Right ventricle myocardium inferior (tissue), 1 donor: ENCODE measurements at regions of chr10 and their contacts with region 1.

Region 1: GRCh38 chr10:31864834-31865518 is 63.7 kb downstream of the ARHGAP12 start:
- DNase-seq: no peak
- ATAC-seq: no peak

Region 2: DNA sequence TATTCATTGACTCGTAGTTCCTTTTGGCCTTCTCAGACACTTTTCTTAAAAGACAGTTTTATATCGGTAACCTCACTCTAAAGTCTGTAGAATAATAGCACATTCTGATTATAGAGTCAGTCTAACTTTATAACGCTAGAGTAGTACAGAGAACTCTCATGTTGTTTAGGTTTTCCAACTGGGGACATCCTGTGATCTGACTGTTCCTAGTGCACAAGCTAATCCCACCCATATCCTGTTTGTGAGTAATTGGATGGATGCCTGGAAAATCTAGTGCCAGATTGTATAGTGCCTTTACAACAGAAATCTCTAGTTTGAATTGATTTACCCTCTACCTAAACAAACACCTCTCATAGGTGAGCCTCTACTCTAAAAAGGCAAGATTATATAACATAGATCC is 438.6 kb before region 1 on chr10:
- intact Hi-C with region 1: no loop called
- DNase-seq: no peak
- ATAC-seq: peak; percentile 61

Region 3: DNA sequence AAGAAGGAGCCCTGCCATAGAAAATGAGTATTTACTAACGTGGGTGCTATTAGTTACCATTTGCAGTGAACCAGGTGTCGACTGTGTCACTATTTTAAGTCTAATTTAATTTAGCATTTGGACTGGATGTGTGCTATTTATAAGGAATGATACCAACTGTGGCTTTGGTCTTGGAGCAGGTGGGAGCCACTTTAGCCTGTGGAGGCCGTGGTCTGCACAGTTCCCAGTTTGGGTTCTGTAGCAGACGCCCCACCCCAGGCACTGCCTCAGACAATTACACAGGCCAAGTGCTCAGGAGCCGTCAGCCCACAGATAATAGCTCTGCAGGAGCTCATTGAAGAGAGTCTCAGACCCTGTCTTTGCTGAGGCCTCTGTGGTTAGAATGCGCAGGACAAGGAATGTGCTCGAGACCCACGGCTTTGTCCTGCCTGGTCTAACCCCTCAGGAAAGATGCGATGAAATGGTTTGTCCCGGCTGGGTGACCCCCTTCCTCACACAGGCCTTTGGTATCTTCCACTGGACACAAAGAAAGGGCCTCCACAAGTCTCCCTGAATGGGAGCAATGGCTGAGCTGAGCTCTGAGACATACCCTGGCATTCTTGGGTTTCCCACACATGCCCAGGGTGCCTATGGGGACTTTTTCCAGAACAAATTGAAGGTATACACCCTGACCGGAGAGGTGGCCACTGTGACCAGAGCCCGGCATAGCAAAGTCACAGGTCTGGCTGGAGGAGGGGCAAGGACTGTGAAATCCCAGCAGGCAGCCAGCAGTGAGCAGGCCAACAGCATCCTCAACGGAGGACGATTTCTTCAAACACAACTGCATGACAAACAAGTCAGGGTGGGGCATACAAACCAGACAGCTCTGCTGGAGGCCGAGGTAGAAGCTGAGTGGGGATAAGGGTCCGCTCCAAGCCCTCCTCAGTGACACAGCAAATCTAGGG is 187.5 kb before region 1 on chr10:
- intact Hi-C with region 1: no loop called
- DNase-seq: no peak
- ATAC-seq: peak; percentile 26

Region 4: GRCh38 chr10:31928549-31929260 is 63.7 kb after region 1 on chr10 and contains the start of gene ARHGAP12:
- intact Hi-C with region 1: loop called (anchors 5 kb)
- DNase-seq: peak; percentile 97
- ATAC-seq: peak; percentile 98
- total RNA-seq, gene ARHGAP12: 21.5 TPM

Region 5: DNA sequence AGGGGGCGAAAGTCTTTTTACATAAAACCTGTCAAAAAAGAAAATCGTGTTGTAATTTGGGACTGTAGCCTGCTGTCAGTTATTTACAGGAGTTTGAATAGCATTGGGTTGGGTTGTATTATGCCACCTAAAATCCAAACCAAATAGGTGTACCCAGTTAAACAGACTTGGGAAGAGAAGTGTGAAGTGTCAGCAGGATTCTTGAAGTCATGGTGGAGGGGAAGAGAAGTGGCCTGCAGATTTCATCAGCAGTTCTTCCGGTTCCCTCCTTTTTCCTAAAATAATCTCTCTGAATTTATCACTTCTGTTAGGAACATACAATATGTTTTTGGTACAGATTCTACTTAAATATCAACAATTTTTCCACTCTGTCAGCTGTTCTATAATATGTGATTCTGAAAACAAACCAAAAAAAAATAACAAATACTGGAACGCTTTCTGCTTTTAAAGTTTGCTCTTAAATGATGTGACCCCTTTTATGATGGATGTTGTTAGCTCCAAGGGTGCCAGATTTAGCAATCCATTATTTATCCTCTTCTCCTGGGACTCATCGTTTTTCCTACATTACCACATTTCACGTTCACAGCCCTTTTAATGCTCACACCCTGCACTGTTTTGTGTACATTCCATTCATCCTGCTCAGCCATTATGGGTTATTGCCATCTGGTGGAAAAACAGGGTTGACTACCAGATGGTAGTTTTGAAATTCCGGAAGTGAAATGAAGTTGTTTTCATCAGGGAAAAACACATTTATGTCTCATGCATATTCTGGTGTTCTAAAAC is 82.4 kb after region 1 on chr10:
- intact Hi-C with region 1: loop called (anchors 5 kb)
- DNase-seq: no peak
- ATAC-seq: peak; percentile 80

Region 6: GRCh38 chr10:32005050-32005449 is 140.1 kb after region 1 on chr10:
- intact Hi-C with region 1: loop called (anchors 2 kb)
- DNase-seq: no peak
- ATAC-seq: peak; percentile 28

Region 7: DNA sequence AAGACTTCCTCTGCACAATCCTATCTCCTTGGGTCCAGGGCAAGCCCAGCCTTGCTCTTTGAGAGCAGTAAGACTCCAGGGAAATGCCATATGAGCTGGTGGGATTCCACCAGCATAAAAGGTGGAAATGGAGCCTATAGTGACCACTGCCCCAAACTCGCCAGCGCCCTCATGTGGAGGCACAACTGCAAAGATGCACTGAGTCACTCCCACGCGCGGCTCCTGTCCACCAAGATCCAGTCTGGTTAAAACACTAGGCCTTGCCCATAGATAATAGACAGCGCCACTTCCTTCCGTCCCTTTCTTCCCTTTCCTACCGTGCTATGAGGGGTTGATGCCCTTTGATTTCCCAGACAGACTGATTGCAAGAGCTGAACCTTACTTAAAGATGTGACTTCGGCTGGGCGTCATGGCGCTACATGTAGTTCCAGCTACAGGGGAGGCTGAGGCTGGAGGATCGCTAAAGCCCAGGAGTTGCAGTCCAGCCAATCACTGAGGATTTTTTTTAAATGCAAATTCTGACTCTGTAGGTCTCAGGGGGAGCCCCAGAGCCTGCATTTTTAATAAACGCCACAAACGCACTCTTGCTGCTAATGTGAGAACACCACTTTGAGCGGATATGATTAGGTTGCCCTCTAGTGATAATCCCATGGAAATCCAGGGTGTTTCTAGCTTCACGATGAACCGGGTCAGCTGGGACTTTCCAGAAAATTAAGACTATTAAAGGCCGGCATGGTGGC is 345.5 kb after region 1 on chr10:
- intact Hi-C with region 1: loop called (anchors 10 kb)
- DNase-seq: no peak
- ATAC-seq: no peak